HepG2 (cell line): ENCODE measurements at regions of chr11 and their contacts with region 1.

Region 1: DNA sequence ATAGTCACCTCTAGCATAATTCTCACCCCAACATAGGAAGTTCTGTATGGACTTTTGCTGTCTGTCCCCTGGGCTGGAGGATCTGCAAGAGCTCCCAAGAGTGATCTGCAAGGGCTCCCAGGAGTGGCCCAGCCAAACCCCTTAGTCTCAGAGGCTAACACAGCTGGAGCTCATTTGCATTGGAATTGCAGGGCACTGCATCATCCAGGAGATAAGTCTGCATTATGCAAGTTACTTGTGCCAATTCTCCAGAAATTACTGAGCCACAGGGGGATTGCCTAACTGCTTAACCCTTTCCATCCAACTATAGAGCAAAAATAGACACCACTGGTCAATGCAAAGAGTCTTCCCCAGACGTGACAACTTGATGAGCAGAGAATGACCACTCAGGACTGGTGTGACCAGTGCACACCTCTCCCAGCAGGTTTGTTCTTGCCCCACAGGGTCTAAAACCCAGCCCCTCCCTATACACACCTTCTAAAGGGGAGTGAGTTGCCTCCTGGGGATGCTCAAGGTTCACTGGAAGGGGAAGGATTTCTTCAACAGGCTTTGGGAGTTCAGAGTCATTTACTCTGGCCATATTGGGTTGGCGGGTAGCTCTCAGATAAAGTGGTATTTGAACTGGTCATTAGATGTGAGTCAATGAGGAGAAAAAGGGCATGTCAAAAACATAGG is 38.4 kb downstream of the POU2AF3 start:
- DNase-seq: peak; percentile 45
- ATAC-seq: no peak
- H3K4me3 ChIP-seq: peak overlapping the region; percentile 35 to 59 (median 49)
- H3K27ac ChIP-seq: peak overlapping the region; percentile 78
- H3K4me1 ChIP-seq: peaks cover 67% of the 10 kb centered on the region
- H3K27me3 ChIP-seq: no peaks in the 10 kb centered on the region
- CTCF ChIP-seq: no peak
- EP300 ChIP-seq: peak; percentile 36 to 56; a peak in 2 of 4 replicates
- POLR2A ChIP-seq: no peak
- RAD21 ChIP-seq: no peak

Region 2: GRCh38 chr11:111283945-111284481 is 52.7 kb before region 1 on chr11:
- CTCF ChIA-PET with region 1: interaction called, 3 read pairs
- POLR2A ChIA-PET with region 1: interaction called, 4 read pairs
- in situ Hi-C with region 1: no loop called
- intact Hi-C with region 1: loop called (anchors 2 kb)
- DNase-seq: no peak
- ATAC-seq: no peak
- H3K4me3 ChIP-seq: no peak overlapping the region
- H3K27ac ChIP-seq: no peak overlapping the region
- H3K4me1 ChIP-seq: peaks cover 74% of the 10 kb centered on the region
- H3K27me3 ChIP-seq: 0 out of 5 replicates have a peak, but pooled peaks cover 0 to 5% of the 10 kb centered on the region in 2 experiments
- CTCF ChIP-seq: no peak
- EP300 ChIP-seq: no peak
- POLR2A ChIP-seq: no peak
- RAD21 ChIP-seq: no peak

Region 3: DNA sequence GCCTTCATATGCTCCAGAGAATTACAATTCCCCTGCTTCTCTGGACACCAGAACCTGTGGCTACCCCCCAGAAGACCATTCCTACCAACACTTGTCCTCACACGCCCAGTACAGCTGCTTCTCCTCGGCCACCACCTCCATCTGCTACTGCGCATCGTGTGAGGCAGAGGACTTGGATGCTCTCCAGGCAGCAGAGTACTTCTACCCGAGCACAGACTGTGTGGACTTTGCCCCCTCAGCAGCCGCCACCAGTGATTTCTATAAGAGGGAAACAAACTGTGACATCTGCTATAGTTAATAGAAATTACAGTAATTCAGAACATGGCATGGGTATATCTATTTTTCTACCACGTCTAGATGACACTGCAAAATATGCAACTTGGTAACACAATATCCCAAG is 28.6 kb before region 1 on chr11:
- CTCF ChIA-PET with region 1: no interaction called
- POLR2A ChIA-PET with region 1: interaction called, 102 read pairs
- in situ Hi-C with region 1: no loop called
- intact Hi-C with region 1: loop called (anchors 2 kb)
- DNase-seq: peak; percentile 78
- ATAC-seq: peak; percentile 92
- H3K4me3 ChIP-seq: no peak overlapping the region
- H3K27ac ChIP-seq: no peak overlapping the region
- H3K4me1 ChIP-seq: peaks cover 77% of the 10 kb centered on the region
- H3K27me3 ChIP-seq: no peaks in the 10 kb centered on the region
- CTCF ChIP-seq: peak; percentile 56
- EP300 ChIP-seq: no peak
- POLR2A ChIP-seq: 0 out of 4 replicates have a peak, but pooled peaks of 1 of the 2 experiments have one; percentile 36
- RAD21 ChIP-seq: peak; percentile 40; the same call in 1 of the 2 replicates

Region 4: DNA sequence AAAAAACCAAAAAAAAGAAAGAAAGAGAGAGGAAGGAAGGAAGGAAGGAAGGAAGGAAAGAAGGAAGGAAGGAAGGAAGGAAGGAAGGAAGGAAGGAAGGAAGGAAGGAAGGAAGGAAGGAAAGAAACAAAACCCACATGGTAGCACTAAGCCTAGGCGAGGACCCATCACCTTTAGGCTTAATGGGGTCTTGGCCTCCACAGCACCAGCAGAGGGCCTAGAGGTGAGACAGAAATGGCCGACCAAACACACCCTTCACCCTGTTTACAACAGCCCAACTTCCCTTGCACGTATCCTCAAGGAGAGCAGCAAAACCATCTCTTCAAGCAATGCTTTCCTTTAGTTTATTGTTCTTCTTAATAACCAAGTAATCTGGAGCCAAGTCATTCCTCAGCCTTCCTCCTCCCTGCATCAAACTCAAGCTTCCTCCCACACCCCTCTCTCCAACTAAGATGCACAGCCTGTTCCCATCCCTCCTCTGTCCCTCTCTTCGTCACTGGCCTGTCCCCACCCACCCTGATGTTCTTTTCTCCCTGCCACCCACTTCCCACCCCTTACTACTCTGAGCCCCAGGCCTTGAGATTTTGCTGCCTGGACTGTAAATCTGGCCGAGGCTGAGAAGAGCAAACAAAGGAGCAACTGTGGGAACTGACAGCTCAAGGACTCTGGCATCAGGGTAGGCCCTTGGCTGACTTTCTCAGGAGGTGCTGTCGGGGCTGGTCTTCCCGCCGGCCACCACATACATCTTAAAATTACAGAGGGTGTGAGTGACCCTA is 16.4 kb after region 1 on chr11:
- CTCF ChIA-PET with region 1: no interaction called
- POLR2A ChIA-PET with region 1: interaction called, 197 read pairs
- in situ Hi-C with region 1: no loop called
- intact Hi-C with region 1: no loop called
- DNase-seq: no peak
- ATAC-seq: no peak
- H3K4me3 ChIP-seq: no peak overlapping the region
- H3K27ac ChIP-seq: no peak overlapping the region
- H3K4me1 ChIP-seq: peaks cover 78% of the 10 kb centered on the region
- H3K27me3 ChIP-seq: no peaks in the 10 kb centered on the region
- CTCF ChIP-seq: no peak
- EP300 ChIP-seq: no peak
- POLR2A ChIP-seq: no peak
- RAD21 ChIP-seq: no peak

Region 5: DNA sequence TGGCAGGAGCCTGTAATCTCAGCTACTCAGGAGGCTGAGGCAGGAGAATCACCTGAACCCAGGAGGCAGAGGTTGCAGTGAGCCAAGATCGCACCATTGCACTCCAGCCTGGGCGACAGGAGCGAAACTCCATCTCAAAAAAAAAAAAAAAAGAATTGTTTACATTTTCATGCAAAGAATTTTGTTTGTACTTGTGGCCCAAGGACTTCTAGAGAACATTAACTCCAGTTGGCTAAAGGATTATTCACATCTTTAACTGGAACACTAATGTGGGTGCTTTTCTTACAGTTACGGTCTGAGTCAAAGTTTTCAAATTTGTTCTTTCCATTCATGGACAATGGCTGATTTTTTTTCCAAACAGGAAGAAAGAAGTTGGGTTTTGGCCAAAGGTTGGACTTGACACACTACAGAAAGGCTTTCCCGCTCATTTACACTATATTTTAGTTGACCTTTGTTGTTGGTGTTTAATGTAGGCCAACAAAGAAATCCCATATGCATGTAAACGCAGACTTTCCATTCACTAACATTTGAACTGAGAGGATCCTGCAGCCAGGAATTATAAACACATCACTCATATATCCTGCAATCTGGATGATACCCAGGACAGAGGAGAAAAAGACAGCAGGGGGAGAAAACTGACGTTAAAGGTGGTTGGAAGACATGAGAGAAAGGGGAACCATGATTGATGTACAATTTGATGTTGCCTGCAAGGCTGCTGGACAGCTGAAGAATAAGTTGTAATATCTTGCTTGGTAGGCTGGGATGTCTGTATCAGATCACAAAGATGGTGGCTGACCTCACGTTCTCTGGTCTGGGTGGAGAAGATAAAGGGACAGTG is 29.2 kb after region 1 on chr11:
- CTCF ChIA-PET with region 1: interaction called, 6 read pairs
- POLR2A ChIA-PET with region 1: interaction called, 197 read pairs
- in situ Hi-C with region 1: no loop called
- intact Hi-C with region 1: loop called (anchors 1 kb)
- DNase-seq: peak; percentile 95
- ATAC-seq: peak; percentile 89
- H3K4me3 ChIP-seq: 0 out of 6 replicates have a peak overlapping the region, but pooled peaks of 1 of the 3 experiments have one; percentile 4
- H3K27ac ChIP-seq: peak overlapping the region; percentile 98
- H3K4me1 ChIP-seq: peaks cover 81% of the 10 kb centered on the region
- H3K27me3 ChIP-seq: no peaks in the 10 kb centered on the region
- CTCF ChIP-seq: no peak
- EP300 ChIP-seq: peak in 1 of 2 experiments; percentile 88; a peak in 1 of 4 replicates
- POLR2A ChIP-seq: no peak; a peak in 1 of 4 replicates
- RAD21 ChIP-seq: no peak; the same call in 1 of the 2 replicates

Region 6: GRCh38 chr11:111387363-111387762 is 50.6 kb after region 1 on chr11:
- CTCF ChIA-PET with region 1: no interaction called
- POLR2A ChIA-PET with region 1: no interaction called
- in situ Hi-C with region 1: no loop called
- intact Hi-C with region 1: no loop called
- DNase-seq: no peak
- ATAC-seq: no peak
- H3K4me3 ChIP-seq: no peak overlapping the region
- H3K27ac ChIP-seq: no peak overlapping the region
- H3K4me1 ChIP-seq: peaks cover 32% of the 10 kb centered on the region
- H3K27me3 ChIP-seq: no peaks in the 10 kb centered on the region
- CTCF ChIP-seq: no peak
- EP300 ChIP-seq: no peak
- POLR2A ChIP-seq: no peak
- RAD21 ChIP-seq: no peak

Region 7: DNA sequence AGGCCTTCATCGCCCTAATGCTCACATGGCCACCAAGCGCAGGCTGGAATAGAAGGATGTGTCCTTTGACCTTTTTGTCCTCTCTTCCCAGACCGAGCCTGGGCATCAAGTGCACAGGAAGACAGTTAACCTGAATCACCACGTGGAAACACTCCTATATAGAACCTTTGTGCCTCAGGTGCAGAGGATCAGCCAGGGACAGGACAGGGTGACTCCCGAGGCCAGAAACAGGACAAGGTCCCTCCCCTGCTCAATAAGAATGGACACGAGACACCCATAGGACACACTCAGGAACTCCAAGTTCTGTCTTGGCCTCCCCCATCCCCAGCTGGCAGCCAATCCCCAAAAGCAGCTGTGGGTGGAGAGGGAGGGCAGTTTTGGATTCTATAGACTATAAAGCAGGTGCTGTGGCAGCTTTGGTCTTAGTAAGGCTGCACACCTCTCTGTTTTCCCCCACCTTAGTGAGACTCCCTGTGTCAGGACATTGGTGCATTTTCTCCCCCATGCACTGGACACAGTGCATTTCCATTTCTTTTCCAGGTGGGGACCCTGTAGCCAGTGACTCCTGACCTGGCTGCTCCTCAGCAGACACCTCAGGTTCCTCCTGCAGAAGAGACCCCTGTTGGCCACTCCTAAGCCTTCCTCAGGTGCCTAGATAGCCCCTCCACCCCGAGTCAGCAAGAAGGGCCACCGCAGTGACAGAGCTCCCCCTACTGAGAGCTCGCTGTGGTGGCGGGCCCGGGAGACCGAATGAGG is 86.0 kb after region 1 on chr11:
- CTCF ChIA-PET with region 1: interaction called, 4 read pairs
- POLR2A ChIA-PET with region 1: interaction called, 27 read pairs
- in situ Hi-C with region 1: no loop called
- intact Hi-C with region 1: loop called (anchors 1 kb)
- DNase-seq: peak; percentile 82
- ATAC-seq: peak; percentile 98
- H3K4me3 ChIP-seq: no peak overlapping the region
- H3K27ac ChIP-seq: peak overlapping the region; percentile 18
- H3K4me1 ChIP-seq: peaks cover 64% of the 10 kb centered on the region
- H3K27me3 ChIP-seq: no peaks in the 10 kb centered on the region
- CTCF ChIP-seq: peak; percentile 100
- EP300 ChIP-seq: peak; percentile 52 to 66; a peak in 2 of 4 replicates
- POLR2A ChIP-seq: no peak
- RAD21 ChIP-seq: peak; percentile 100

Region 8: DNA sequence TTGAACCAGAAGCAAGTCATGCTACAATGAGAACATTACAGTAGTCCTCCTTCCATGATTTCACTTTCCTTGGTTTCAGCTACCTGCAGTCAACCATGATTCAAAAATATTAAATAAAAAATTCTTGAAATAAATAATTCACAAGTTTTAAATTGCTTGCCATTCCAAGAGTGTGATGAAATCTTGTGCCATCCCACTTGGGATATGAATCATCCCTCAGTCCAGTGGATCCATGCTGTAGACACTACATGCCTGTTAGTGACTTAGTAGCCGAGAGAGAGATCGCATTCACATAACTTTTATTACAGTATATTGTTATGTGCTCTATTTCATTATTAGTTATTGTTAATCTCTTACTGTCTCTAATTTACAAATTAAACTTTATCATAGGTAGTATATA is 183.8 kb after region 1 on chr11:
- CTCF ChIA-PET with region 1: no interaction called
- POLR2A ChIA-PET with region 1: no interaction called
- in situ Hi-C with region 1: no loop called
- intact Hi-C with region 1: no loop called
- DNase-seq: no peak
- ATAC-seq: no peak
- H3K4me3 ChIP-seq: no peak overlapping the region
- H3K27ac ChIP-seq: no peak overlapping the region
- H3K4me1 ChIP-seq: peaks cover 1% of the 10 kb centered on the region; the same call in 1 of the 2 replicates
- H3K27me3 ChIP-seq: peaks cover 0 to 18% of the 10 kb centered on the region in 2 experiments; a peak in 1 of 5 replicates
- CTCF ChIP-seq: no peak
- EP300 ChIP-seq: no peak
- POLR2A ChIP-seq: no peak
- RAD21 ChIP-seq: no peak